MCF 10A (cell line): ENCODE measurements at regions of chr12 and their contacts with region 1.

Region 1: DNA sequence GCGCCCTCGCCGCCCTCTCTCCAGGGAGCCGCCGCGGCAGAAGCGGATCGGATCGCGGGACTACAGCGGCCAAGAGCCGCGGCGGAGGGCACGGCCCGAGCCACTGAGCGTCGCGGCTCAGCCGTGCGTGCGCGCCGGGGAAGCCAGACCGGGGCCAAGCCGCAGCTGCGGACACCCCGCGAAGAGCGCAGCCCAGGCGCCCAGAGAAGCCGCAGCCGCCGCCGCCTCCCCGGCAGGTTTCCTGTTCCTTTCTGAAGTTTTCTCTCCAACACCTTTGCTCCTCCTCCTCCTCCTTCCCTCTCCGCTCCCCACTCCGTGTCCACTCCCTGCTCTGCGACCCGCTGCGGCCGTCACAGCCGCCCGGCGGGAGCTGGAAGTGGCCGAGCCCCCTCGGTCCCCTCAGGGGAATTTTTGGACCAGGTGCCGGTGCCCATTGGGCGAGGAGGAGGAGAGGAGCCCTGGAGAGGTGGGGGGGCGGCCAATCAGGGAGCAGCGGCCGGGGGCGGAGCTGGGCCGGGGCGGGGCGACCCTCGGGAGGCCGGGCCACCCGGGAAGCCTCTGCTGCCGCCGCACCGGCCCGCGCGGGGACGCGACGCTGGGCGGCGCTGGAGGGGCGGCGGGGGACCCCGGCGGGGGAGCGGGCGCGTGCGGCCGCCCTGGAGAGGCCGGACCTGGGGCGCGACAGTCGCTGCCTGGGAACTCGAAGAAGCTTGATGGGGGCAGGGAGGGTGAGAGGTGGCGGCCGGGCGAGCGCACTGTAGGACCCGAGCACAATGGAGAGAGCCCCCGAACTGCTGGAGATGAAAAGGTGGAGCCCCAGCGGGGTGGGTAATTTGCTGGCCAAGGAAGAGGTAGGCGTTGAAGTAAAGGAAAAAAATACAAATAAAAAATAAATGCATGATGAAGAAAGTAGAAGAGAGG is at the start of gene ITPR2:
- DNase-seq: peak; percentile 96
- H3K4me3 Mint-ChIP-seq: peak within 1 kb of the TSS; percentile 90
- H3K27ac Mint-ChIP-seq: peak within 1 kb of the TSS; percentile 89
- H3K4me1 Mint-ChIP-seq: peaks cover 16% of the 10 kb centered on the region
- H3K27me3 Mint-ChIP-seq: no peaks in the 10 kb centered on the region
- CTCF ChIP-seq: peak; percentile 38
- total RNA-seq, gene ITPR2: 14.3 and 15.7 TPM in 2 replicates

Region 2: DNA sequence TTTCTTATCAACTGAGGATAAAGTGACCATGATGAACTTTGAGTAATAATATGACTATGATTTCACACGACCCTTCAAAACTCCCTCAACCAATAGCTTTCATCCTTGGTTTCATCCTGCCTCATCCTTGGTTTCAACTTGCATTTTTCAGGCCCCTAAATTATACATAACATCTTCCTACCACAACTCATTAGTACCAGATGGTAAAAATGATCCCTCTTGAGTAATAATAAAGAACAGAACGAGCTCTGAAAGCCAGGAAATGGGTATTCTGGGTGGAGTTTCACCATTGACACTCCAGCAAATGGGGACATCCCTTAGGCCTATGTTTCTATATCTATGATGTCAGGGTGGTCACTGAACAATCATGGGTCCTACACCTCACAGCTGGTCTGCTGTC is 1207.9 kb before region 1 on chr12:
- CTCF ChIA-PET with region 1: no interaction called
- POLR2A ChIA-PET with region 1: no interaction called
- intact Hi-C with region 1: no loop called
- DNase-seq: no peak
- H3K4me3 Mint-ChIP-seq: no peak overlapping the region
- H3K27ac Mint-ChIP-seq: no peak overlapping the region
- H3K4me1 Mint-ChIP-seq: no peaks in the 10 kb centered on the region
- H3K27me3 Mint-ChIP-seq: no peaks in the 10 kb centered on the region
- CTCF ChIP-seq: no peak

Region 3: GRCh38 chr12:26691234-26691970 is 141.7 kb before region 1 on chr12:
- CTCF ChIA-PET with region 1: interaction called, 4 read pairs
- POLR2A ChIA-PET with region 1: interaction called, 11 read pairs
- intact Hi-C with region 1: no loop called
- DNase-seq: peak; percentile 96
- H3K4me3 Mint-ChIP-seq: peak overlapping the region; percentile 47
- H3K27ac Mint-ChIP-seq: peak overlapping the region; percentile 91
- H3K4me1 Mint-ChIP-seq: peaks cover 31% of the 10 kb centered on the region
- H3K27me3 Mint-ChIP-seq: no peaks in the 10 kb centered on the region
- CTCF ChIP-seq: no peak

Region 4: DNA sequence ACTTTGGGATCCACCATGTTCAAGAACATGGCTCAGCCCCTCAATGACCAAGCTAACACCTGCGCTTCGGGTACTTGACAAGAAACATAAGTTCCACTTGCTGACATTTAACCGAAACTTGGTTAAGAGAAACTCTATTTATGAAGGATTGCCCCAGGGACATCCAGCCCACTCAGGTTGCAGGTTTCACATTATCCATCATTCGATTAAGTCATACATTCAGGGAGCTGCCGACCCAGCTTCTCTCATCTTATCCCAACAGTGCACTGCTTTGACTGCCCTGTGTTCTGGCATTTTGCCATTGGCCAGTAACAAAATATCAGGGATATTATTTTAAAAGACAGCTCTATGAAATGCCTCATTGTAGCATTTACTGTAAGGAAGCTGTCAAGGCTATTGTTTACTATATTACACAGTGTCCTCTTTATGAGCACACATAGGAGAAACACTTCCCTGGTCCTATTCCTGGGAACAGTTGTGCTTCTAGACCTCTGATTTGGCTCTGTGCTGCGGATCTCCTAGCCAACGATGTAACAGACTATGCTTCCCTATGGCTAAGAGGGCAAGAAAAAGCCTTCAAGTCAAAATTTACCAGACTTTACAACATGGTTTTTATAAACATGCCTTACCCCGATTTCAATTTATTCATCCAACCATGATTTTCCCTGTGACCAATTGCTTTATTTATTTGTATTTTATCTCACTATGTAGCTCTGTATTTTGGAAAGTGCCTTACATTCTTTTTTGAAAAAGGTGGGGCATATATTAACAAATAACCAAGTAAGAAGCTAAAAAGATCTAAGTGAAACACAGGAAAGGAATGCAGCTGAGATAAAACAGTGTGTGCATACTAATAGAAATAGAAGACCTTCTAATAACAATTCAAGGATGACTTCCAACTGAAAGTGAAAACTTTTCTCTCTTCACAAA is 109.4 kb before region 1 on chr12:
- CTCF ChIA-PET with region 1: interaction called, 4 read pairs
- POLR2A ChIA-PET with region 1: interaction called, 11 read pairs
- intact Hi-C with region 1: loop called (anchors 5 kb)
- DNase-seq: no peak
- H3K4me3 Mint-ChIP-seq: peak overlapping the region; percentile 24
- H3K27ac Mint-ChIP-seq: peak overlapping the region; percentile 57
- H3K4me1 Mint-ChIP-seq: peaks cover 34% of the 10 kb centered on the region
- H3K27me3 Mint-ChIP-seq: no peaks in the 10 kb centered on the region
- CTCF ChIP-seq: no peak

Region 5: GRCh38 chr12:26803552-26803951 is 29.5 kb before region 1 on chr12:
- CTCF ChIA-PET with region 1: interaction called, 3 read pairs
- POLR2A ChIA-PET with region 1: interaction called, 20 read pairs
- intact Hi-C with region 1: no loop called
- DNase-seq: peak; percentile 50
- H3K4me3 Mint-ChIP-seq: no peak overlapping the region
- H3K27ac Mint-ChIP-seq: peak overlapping the region; percentile 81
- H3K4me1 Mint-ChIP-seq: peaks cover 16% of the 10 kb centered on the region
- H3K27me3 Mint-ChIP-seq: no peaks in the 10 kb centered on the region
- CTCF ChIP-seq: no peak

Region 6: DNA sequence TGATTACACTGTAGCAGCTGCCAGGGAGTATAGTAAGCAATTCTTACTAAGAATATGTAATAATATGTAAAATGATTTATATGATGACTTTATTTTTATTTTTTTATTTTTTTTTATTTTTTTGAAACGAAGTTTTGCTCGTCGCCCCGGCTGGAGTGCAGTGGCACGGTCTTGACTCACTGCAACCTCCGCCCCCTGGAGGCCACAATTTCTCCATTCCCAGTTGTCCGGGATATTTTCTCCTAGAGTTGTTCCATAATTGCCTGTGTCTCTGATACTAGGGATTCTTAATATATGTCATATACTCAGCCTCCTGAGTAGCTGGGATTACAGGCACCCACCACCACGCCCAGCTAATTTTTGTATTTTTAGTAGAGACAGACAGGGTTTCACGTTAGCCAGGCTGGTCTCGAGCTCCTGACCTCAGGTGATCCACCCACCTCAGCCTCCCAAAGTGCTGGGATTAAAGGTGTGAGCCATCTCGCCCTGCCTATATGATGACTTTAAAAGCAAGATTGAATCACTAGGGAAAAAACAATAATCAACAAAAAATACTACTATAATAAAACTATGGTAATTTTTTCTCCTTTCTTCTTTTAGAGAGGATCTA is 12.1 kb after region 1 on chr12:
- CTCF ChIA-PET with region 1: interaction called, 38 read pairs
- POLR2A ChIA-PET with region 1: interaction called, 17 read pairs
- intact Hi-C with region 1: no loop called
- DNase-seq: peak; percentile 66
- H3K4me3 Mint-ChIP-seq: no peak overlapping the region
- H3K27ac Mint-ChIP-seq: no peak overlapping the region
- H3K4me1 Mint-ChIP-seq: no peaks in the 10 kb centered on the region
- H3K27me3 Mint-ChIP-seq: no peaks in the 10 kb centered on the region
- CTCF ChIP-seq: peak; percentile 74